Panc1 (cell line): ENCODE measurements at regions of chrX and their contacts with region 1.

Region 1: DNA sequence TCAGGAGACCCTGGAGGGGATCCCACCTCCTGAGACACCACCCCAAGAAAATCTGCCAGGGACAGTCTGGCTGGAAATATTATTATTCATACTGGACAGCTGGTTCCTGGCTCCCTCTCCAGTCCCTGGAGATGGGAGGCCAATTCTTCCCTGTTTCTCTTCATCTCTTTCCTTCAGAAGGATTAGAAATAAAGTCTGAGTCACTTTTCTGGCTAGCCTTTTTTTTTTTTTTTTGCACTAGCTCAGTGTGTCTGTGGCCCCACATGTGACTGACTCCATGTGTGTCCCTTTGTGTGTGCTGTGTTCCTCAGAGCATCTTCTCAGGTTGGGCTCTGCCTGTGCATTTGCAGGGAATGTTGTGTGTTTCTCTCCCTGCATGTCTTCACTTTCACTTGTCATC is 1.8 kb upstream of the FRMPD3 start:
- DNase-seq: no peak
- ATAC-seq: no peak
- H3K4me3 ChIP-seq: no peak overlapping the region
- H3K27ac ChIP-seq: no peak overlapping the region
- H3K4me1 ChIP-seq: 0 out of 2 replicates have a peak, but pooled peaks cover 3% of the 10 kb centered on the region
- H3K27me3 ChIP-seq: peaks cover 5% of the 10 kb centered on the region
- CTCF ChIP-seq: no peak

Region 2: GRCh38 chrX:106649523-106650428 is 797.9 kb before region 1 on chrX:
- CTCF ChIA-PET with region 1: no interaction called
- POLR2A ChIA-PET with region 1: no interaction called
- in situ Hi-C with region 1: no loop called
- intact Hi-C with region 1: no loop called
- DNase-seq: no peak
- ATAC-seq: no peak
- H3K4me3 ChIP-seq: no peak overlapping the region
- H3K27ac ChIP-seq: no peak overlapping the region
- H3K4me1 ChIP-seq: no peaks in the 10 kb centered on the region
- H3K27me3 ChIP-seq: no peaks in the 10 kb centered on the region
- CTCF ChIP-seq: no peak

Region 3: DNA sequence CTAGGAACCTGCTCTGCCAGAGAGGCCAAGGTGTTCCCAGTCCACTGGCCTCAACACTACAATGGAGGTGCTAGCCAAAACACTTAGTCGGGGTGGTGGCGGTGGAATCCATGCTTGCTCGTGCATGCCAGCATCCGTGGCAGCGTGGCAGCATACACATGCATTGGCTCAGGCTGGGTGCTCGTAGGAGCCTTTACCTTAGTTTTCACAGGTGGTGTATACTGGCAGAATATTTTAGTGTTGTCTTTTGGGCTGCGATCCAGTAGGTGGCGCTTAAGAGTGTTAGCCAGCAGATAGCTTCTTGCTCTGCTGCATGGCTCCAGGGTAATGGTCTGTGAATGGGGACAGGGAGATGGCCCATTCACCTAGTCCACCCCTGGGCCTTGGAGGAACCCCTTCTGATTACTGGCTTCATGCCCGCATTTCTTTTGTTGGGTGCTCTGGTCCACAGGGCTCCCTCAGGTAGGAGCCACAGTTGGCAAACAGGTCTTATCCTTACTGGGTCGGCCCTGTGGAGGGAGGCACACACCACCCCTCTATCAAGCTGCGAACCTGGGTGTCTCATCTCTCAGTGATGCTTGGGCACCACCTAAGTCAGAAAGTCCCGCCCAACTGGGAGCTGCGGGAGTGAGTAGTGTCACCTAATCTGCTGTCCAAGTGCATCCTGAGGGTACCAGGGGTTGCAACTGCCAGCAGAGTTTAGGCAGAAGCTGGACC is 584.5 kb before region 1 on chrX:
- CTCF ChIA-PET with region 1: interaction called, 11 read pairs
- POLR2A ChIA-PET with region 1: no interaction called
- in situ Hi-C with region 1: no loop called
- intact Hi-C with region 1: no loop called
- DNase-seq: peak; percentile 12
- ATAC-seq: peak; percentile 65; the same call in 1 of the 2 replicates
- H3K4me3 ChIP-seq: no peak overlapping the region
- H3K27ac ChIP-seq: no peak overlapping the region
- H3K4me1 ChIP-seq: no peaks in the 10 kb centered on the region
- H3K27me3 ChIP-seq: no peaks in the 10 kb centered on the region
- CTCF ChIP-seq: peak; percentile 78

Region 4: DNA sequence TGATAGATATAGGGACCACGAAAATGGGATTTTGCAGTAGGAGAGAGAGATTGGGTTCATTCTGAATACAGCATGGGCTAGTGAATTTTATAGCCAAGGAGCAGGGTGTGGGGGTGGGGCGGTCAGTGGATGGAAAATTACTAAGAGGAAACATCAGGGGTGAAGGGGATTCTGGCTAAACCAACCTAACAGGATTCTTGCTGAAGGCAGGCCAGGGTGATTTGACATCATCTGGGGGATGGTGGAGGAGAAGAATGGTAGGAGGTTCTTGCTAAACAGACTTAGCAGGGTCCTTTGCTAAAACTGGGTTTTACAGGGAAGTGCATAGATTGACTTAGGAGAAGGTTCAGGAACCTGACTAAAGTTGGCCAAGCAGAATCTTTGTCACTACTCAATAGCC is 149.4 kb before region 1 on chrX:
- CTCF ChIA-PET with region 1: no interaction called
- POLR2A ChIA-PET with region 1: no interaction called
- in situ Hi-C with region 1: no loop called
- intact Hi-C with region 1: no loop called
- DNase-seq: no peak
- ATAC-seq: no peak
- H3K4me3 ChIP-seq: no peak overlapping the region
- H3K27ac ChIP-seq: no peak overlapping the region
- H3K4me1 ChIP-seq: no peaks in the 10 kb centered on the region
- H3K27me3 ChIP-seq: peaks cover 2% of the 10 kb centered on the region
- CTCF ChIP-seq: no peak

Region 5: DNA sequence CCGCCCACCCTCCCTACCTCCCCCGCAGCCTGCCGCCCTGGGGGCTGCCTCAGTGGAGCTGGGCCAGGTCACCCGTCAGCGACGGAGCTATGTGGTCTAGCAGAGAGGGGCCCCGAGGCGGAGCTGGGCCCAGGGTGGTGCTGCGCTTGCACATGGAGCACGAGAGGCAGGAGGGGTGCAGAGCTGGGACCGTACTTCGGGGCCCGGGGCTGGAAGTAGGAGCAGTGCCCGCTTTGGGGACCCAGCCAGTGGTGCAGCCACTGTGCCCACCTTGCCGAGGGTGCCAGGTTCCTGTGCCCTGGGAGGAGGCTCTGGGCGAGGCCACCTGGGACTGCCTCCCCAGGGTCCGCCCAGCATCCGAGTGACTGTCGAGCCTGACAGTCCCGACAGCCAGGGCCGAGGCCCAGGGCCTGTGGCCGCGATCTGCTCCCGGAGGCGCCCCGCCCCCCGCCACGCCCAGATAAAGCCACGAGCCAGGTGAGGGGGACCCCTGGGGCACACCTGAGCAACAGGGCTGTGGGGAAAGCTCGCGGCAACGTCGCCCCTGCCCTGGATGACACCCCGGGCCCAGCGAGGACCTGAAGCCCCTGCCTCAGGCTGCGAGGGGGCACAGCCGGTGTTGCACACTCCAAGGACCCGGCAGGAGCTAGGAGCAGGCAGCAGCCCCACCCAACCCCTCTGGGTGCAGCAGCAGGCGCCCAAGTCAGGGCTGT is 123.7 kb before region 1 on chrX:
- CTCF ChIA-PET with region 1: no interaction called
- POLR2A ChIA-PET with region 1: no interaction called
- in situ Hi-C with region 1: no loop called
- intact Hi-C with region 1: no loop called
- DNase-seq: no peak
- ATAC-seq: no peak
- H3K4me3 ChIP-seq: no peak overlapping the region
- H3K27ac ChIP-seq: no peak overlapping the region
- H3K4me1 ChIP-seq: no peaks in the 10 kb centered on the region
- H3K27me3 ChIP-seq: no peaks in the 10 kb centered on the region; the same call in 1 of the 2 replicates
- CTCF ChIP-seq: no peak